ENCODE measurements at regions of chr17 and their contacts with region 1.

Region 1: GRCh38 chr17:8740486-8740885 is 4.2 kb downstream of the CCDC42 start:
- DNase-seq: no peak
- H3K4me3 ChIP-seq: no peak overlapping the region
- H3K27ac ChIP-seq: no peak overlapping the region
- H3K4me1 ChIP-seq: peaks cover 4 to 10% of the 10 kb centered on the region in 2 donors
- H3K27me3 ChIP-seq: no peaks in the 10 kb centered on the region
- CTCF ChIP-seq: no peak

Region 2: DNA sequence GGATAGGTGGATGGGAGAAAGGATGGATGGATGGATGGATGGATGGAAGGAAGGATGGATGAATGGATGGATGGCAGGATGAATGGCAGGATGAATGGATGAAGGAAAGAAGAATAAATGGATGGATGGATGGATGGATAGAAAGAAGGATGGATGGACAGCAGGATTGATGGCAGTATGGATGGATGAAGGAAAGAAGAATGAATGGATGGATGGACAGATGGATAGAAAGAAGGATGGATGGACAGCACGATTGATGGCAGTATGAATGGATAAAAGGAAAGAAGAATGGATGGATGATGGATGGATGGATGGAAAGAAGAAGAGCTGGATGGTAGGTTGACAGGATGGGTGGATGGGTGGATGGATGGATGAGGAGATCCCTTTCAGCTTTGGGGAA is 100.8 kb before region 1 on chr17:
- intact Hi-C with region 1: no loop called
- DNase-seq: no peak
- H3K4me3 ChIP-seq: no peak overlapping the region
- H3K27ac ChIP-seq: no peak overlapping the region
- H3K4me1 ChIP-seq: no peaks in the 10 kb centered on the region
- H3K27me3 ChIP-seq: no peaks in the 10 kb centered on the region
- CTCF ChIP-seq: no peak

Region 3: DNA sequence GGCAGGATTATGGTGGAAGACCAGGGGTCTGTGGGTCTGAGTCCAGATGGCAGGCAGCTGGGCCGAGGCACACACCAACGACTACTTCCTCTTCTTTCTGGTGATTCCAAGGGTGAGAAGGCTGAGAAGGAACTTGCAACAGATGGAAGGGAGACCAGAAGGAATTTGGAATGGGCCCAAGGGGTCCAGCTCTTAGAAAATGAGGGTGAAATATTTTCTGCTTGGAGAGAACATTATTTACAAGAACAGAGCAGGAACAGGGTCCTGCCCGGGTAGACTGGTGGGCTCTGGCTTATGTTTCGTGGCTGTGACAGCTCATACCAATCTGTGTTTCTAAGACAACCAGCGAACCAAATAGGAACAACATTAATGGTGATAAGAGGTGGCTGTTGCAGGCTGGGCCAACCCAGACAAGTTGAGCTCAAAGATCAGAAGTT is 32.4 kb before region 1 on chr17:
- intact Hi-C with region 1: loop called (anchors 5 kb)
- DNase-seq: peak in 1 of 2 donors; percentile 81
- H3K4me3 ChIP-seq: no peak overlapping the region
- H3K27ac ChIP-seq: peak overlapping the region; percentile 90 to 92
- H3K4me1 ChIP-seq: peaks cover 12 to 22% of the 10 kb centered on the region in 2 donors
- H3K27me3 ChIP-seq: no peaks in the 10 kb centered on the region
- CTCF ChIP-seq: no peak